MCF 10A (cell line): ENCODE measurements at regions of chr12 and their contacts with region 1.

Region 1: GRCh38 chr12:50132505-50133135 is 20.6 kb downstream of the COX14 start:
- DNase-seq: peak; percentile 62
- H3K4me3 Mint-ChIP-seq: no peak overlapping the region
- H3K27ac Mint-ChIP-seq: no peak overlapping the region
- H3K4me1 Mint-ChIP-seq: peaks cover 4% of the 10 kb centered on the region
- H3K27me3 Mint-ChIP-seq: no peaks in the 10 kb centered on the region
- CTCF ChIP-seq: peak; percentile 48

Region 2: GRCh38 chr12:50055831-50056638 is 76.6 kb before region 1 on chr12:
- CTCF ChIA-PET with region 1: no interaction called
- POLR2A ChIA-PET with region 1: no interaction called
- intact Hi-C with region 1: no loop called
- DNase-seq: peak; percentile 61
- H3K4me3 Mint-ChIP-seq: peak overlapping the region; percentile 90
- H3K27ac Mint-ChIP-seq: peak overlapping the region; percentile 3
- H3K4me1 Mint-ChIP-seq: peaks cover 18% of the 10 kb centered on the region
- H3K27me3 Mint-ChIP-seq: peaks cover 35% of the 10 kb centered on the region
- CTCF ChIP-seq: peak; percentile 97

Region 3: DNA sequence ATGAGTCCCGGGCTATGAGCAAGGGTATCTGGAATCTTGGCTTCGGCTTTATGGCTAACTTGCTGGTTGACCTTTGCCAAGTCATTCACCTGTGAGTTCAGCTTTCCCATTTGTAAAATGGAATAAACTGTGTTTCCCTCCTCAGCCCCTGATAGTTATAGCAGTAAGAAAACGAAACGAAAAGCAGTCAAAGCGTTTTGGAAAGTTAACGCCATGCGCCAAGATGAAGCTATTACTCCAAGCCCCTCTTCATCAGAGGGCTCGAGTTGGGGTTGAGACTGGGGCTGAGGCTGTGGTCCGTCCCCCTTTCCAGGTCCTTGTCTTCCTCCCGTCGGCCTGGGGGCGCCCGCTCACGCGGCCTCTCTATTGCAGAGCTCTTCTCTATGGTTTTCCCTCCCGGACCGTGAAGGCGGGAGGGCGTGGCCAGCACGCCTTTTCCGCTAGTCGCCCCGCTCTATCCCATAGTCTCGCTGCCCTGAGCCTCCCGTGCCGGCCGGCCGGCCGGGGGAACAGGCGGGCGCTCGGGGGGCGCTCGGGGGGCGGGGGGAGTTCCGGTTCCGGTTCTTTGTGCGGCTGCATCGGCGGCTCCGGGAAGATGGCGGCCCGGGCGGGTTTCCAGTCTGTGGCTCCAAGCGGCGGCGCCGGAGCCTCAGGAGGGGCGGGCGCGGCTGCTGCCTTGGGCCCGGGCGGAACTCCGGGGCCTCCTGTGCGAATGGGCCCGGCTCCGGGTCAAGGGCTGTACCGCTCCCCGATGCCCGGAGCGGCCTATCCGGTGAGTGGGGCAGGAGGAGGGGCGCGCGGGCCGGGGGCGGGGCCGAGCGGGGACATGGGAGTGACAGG is 47.6 kb before region 1 on chr12 and contains the start of gene SMARCD1:
- CTCF ChIA-PET with region 1: interaction called, 12 read pairs
- POLR2A ChIA-PET with region 1: interaction called, 3 read pairs
- intact Hi-C with region 1: no loop called
- DNase-seq: peak; percentile 90
- H3K4me3 Mint-ChIP-seq: peak within 1 kb of the TSS; percentile 87
- H3K27ac Mint-ChIP-seq: peak within 1 kb of the TSS; percentile 90
- H3K4me1 Mint-ChIP-seq: peaks cover 33% of the 10 kb centered on the region
- H3K27me3 Mint-ChIP-seq: no peaks in the 10 kb centered on the region
- CTCF ChIP-seq: no peak
- total RNA-seq, gene SMARCD1: 57.4 and 58.7 TPM in 2 replicates

Region 4: DNA sequence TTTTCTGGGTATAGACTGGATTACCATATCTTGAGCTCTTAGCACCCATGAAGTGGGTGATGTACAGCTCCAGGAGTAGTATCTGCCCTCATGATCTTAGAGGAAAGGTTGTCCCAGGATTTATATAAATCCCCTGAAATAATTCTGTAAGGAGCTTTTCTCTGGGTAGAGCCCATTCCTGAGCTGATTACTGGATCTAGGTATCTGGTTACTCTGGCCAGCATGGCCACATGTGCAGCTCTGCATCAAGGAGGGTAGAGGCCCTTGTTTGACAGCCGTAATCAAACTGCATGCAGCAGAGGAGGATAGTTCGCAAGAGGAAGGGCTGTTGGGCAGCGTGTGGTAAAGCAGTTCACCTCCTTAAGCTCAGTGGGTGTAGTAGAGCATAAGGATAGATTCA is 12.1 kb before region 1 on chr12:
- CTCF ChIA-PET with region 1: interaction called, 18 read pairs
- POLR2A ChIA-PET with region 1: interaction called, 7 read pairs
- intact Hi-C with region 1: no loop called
- DNase-seq: no peak
- H3K4me3 Mint-ChIP-seq: no peak overlapping the region
- H3K27ac Mint-ChIP-seq: no peak overlapping the region
- H3K4me1 Mint-ChIP-seq: no peaks in the 10 kb centered on the region
- H3K27me3 Mint-ChIP-seq: no peaks in the 10 kb centered on the region
- CTCF ChIP-seq: no peak

Region 5: GRCh38 chr12:50151047-50151687 is 18.5 kb after region 1 on chr12:
- CTCF ChIA-PET with region 1: interaction called, 20 read pairs
- POLR2A ChIA-PET with region 1: interaction called, 3 read pairs
- intact Hi-C with region 1: no loop called
- DNase-seq: no peak
- H3K4me3 Mint-ChIP-seq: no peak overlapping the region
- H3K27ac Mint-ChIP-seq: no peak overlapping the region
- H3K4me1 Mint-ChIP-seq: no peaks in the 10 kb centered on the region
- H3K27me3 Mint-ChIP-seq: no peaks in the 10 kb centered on the region
- CTCF ChIP-seq: no peak

Region 6: DNA sequence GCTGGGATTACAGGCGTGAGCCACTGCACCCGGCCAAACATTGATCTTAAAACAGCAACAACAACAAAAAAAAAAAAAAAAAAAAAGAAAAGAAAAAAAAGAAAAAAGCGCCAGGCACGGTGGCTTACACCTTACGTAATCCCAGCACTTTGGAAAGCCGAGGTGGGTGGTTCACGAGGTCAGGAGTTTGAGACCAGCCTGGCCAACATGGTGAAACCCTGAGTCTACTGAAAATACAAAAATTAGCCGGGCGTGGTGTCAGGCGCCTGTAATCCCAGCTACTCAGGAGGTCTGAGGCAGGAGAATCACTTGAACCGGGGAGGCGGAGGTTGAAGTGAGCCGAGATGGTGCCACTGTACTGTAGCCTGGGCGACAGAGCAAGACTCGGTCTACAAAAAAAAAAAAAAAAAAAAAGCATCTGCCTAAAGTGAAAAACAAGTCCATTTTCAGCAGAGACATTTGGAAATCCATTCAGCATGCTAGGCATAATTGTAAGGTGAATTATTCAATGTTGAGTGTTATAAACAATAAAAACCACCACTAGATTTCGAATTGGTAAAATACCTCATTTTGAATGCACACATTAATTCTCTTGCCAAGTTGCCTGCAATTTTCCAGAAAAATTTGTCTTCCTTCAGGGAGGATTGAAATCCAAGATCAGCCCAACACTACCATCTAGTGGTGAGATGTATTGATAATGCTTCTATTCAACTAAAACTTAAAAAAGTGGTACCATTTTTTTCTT is 42.5 kb after region 1 on chr12:
- CTCF ChIA-PET with region 1: interaction called, 34 read pairs
- POLR2A ChIA-PET with region 1: interaction called, 8 read pairs
- intact Hi-C with region 1: loop called (anchors 1 kb)
- DNase-seq: peak; percentile 81
- H3K4me3 Mint-ChIP-seq: no peak overlapping the region
- H3K27ac Mint-ChIP-seq: no peak overlapping the region
- H3K4me1 Mint-ChIP-seq: no peaks in the 10 kb centered on the region
- H3K27me3 Mint-ChIP-seq: no peaks in the 10 kb centered on the region
- CTCF ChIP-seq: peak; percentile 64

Region 7: GRCh38 chr12:50246873-50247612 is 114.4 kb after region 1 on chr12:
- CTCF ChIA-PET with region 1: no interaction called
- POLR2A ChIA-PET with region 1: no interaction called
- intact Hi-C with region 1: no loop called
- DNase-seq: peak; percentile 98
- H3K4me3 Mint-ChIP-seq: peak overlapping the region; percentile 30
- H3K27ac Mint-ChIP-seq: peak overlapping the region; percentile 53
- H3K4me1 Mint-ChIP-seq: peaks cover 15% of the 10 kb centered on the region
- H3K27me3 Mint-ChIP-seq: no peaks in the 10 kb centered on the region
- CTCF ChIP-seq: no peak